GM10248 (cell line): ENCODE measurements at regions of chr9 and their contacts with region 1.

Region 1: GRCh38 chr9:69971643-69972449 is 71.8 kb upstream of the MAMDC2 start:
- DNase-seq: peak; percentile 63
- CTCF ChIP-seq: peak; percentile 84

Region 2: GRCh38 chr9:69961830-69962229 is 10.0 kb before region 1 on chr9:
- CTCF ChIA-PET with region 1: interaction called, 10 read pairs
- POLR2A ChIA-PET with region 1: no interaction called
- DNase-seq: no peak
- CTCF ChIP-seq: no peak

Region 3: GRCh38 chr9:69981686-69982450 is 10.0 kb after region 1 on chr9:
- CTCF ChIA-PET with region 1: interaction called, 22 read pairs
- POLR2A ChIA-PET with region 1: no interaction called
- DNase-seq: no peak
- CTCF ChIP-seq: no peak

Region 4: DNA sequence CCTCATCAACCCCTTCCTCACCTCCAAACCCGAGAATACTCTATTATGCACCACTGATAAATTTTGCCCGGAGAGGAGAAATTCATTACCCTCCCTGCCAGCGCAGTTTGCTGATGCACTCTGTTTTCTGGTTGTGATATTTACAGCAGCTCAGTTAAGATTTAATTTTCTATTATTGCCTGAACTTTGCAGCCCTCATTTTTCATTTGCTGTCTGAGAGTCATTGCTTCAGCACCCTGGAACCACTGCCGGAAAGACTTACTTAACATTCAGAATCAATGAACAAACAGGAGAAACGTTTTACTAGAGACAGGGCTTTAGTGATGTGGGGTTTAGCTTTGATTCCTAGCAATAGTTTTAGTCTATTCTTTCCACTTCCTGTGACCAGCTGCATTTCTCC is 15.1 kb after region 1 on chr9:
- CTCF ChIA-PET with region 1: interaction called, 22 read pairs
- POLR2A ChIA-PET with region 1: no interaction called
- DNase-seq: no peak
- CTCF ChIP-seq: no peak

Region 5: DNA sequence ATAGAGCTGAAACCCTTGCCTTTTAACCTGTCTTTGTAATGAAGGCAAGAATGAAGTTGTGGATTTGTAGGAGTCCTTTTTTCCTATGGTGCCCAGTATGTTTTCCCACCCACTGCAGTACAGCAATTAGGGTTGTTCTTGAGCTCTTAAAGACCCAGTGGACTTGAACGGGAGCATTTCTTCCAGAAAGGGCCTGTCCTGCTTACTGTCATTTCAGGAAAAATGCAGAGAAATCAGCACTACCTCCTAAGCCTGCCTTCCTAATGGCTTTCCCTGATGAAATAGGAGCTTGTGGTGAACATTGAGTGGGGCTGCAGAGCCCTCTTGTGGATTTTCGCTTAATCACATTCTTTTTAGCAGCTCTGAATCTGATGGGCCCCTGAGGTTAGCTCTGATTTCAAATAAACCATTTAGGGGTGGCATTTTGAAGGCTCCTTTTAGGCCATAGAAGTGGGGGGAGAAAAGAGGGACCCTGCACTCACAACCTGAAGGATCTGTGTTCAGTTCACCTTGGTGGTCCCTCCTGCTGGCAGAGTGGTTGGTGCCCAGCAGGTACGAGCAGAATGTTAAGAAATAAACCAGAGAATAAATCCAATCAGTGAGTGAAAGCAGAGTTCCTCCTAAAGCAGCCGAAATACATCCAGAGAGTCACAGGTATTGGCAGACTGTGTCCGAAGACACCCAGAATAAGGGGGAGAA is 630.6 kb after region 1 on chr9:
- CTCF ChIA-PET with region 1: interaction called, 27 read pairs
- POLR2A ChIA-PET with region 1: no interaction called
- DNase-seq: peak; percentile 54
- CTCF ChIP-seq: peak; percentile 67